Activated CD8-positive, alpha-beta T cell treated with anti-CD3 and anti-CD28 coated beads for 36 hours (primary cell): ENCODE measurements at regions of chr3 and their contacts with region 1.

Region 1: DNA sequence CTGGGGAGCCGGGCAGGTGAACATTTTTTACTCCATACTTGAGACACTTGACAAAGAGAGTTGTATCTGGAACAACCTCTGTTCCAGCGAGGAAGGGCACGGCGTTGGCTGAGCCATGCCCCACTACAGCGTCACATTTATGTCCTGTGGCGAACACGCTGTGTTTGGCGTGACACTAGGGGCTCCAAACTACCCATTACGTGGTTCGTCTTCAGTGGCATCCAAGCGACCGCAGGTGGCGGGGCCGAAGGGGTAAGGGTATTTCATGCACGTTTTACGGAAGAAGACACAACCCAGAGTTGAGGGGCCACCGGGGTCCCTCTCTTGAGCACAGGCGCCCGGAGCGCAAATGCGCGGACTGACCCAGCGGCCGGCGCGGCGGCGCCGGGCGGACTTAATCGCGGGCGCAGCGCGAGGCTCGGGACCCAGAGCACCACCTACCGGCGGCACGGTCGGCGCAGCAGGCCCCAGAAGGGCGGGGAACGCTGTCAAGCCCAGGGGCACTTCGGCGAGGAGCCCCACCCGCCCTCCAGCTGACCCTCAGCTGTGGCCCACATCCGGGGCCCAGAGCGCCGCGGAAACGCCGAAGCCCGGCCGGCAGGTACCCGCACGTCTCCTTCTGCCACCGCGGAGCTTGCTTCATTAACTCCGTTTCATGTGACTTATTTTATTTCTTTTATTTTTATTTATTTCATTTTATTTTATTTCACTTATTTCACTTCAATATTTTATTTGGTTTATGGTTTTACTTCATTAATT is 36.4 kb upstream of the TRIM71 start:
- DNase-seq: peak; percentile 83
- ATAC-seq: peak; percentile 93
- H3K4me3 Mint-ChIP-seq: peak overlapping the region; percentile 78
- H3K27ac Mint-ChIP-seq: no peak overlapping the region
- H3K4me1 Mint-ChIP-seq: peaks cover 8% of the 10 kb centered on the region
- H3K27me3 Mint-ChIP-seq: peaks cover 17% of the 10 kb centered on the region
- CTCF ChIP-seq: peak; percentile 91

Region 2: GRCh38 chr3:32438596-32439344 is 342.6 kb before region 1 on chr3:
- CTCF ChIA-PET with region 1: no interaction called
- POLR2A ChIA-PET with region 1: no interaction called
- intact Hi-C with region 1: no loop called
- DNase-seq: peak; percentile 64
- ATAC-seq: peak; percentile 77
- H3K4me3 Mint-ChIP-seq: peak overlapping the region; percentile 11
- H3K27ac Mint-ChIP-seq: peak overlapping the region; percentile 81
- H3K4me1 Mint-ChIP-seq: peaks cover 83% of the 10 kb centered on the region
- H3K27me3 Mint-ChIP-seq: no peaks in the 10 kb centered on the region
- CTCF ChIP-seq: no peak

Region 3: DNA sequence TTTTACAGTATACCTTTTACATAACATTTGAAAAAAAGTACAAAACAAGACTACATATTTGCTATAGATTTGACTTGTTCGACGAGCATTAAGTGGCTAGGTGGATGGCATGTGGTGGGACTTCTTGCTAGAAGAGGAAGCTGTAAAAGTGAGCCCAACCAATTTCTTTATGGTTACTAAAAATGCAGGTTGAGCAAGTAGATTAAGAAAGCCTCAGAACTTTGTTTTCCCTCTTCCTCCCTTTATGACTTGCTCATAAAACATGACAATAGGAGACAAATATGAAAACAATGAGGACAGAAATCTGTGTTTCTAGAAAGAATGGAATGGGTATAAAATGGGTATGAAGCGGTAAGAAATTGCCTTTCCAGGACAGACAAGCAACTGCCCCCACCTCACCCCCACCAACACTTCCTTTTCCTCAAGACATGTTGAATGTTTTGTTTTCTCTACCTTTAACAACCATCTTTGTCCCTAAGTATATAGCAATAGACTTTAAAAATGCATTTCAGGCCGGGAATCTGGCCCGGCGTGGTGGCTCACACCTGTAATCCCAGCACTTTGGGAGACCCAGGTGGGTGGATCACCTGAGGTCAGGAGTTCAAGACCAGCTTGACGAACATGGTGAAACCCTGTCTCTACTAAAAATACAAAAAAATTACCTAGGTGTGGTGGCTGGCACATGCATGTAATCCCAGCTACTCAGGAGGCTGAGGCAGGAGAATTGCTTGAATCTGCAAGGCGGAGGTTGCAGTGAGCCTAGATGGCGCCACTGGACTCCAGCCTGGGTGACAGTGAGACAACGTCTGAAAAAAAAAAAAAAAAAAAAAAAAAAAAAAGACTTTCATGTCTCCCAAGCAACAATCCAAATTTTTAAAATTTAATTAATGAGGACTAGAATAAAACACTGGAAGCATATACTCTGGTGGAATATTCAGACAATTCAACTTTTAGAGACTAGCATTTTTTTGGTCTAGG is 120.3 kb after region 1 on chr3:
- CTCF ChIA-PET with region 1: interaction called, 10 read pairs
- POLR2A ChIA-PET with region 1: no interaction called
- intact Hi-C with region 1: no loop called
- DNase-seq: peak; percentile 67
- ATAC-seq: no peak
- H3K4me3 Mint-ChIP-seq: peak overlapping the region; percentile 4
- H3K27ac Mint-ChIP-seq: no peak overlapping the region
- H3K4me1 Mint-ChIP-seq: no peaks in the 10 kb centered on the region
- H3K27me3 Mint-ChIP-seq: peaks cover 7% of the 10 kb centered on the region
- CTCF ChIP-seq: peak; percentile 53